Head of caudate nucleus (tissue), 42 donors: ENCODE measurements at regions of chr6 and their contacts with region 1.

Region 1: GRCh38 chr6:138588805-138589434 is 89.6 kb upstream of the NHSL1 start:
- DNase-seq: peak in 40 of 42 donors; percentile 30 to 85 (median 64)

Region 2: GRCh38 chr6:138428944-138429598 is 159.8 kb before region 1 on chr6:
- intact Hi-C with region 1: loop called (anchors 10 kb)
- DNase-seq: peak in 3 of 42 donors; percentile 37 to 53 (median 46)

Region 3: DNA sequence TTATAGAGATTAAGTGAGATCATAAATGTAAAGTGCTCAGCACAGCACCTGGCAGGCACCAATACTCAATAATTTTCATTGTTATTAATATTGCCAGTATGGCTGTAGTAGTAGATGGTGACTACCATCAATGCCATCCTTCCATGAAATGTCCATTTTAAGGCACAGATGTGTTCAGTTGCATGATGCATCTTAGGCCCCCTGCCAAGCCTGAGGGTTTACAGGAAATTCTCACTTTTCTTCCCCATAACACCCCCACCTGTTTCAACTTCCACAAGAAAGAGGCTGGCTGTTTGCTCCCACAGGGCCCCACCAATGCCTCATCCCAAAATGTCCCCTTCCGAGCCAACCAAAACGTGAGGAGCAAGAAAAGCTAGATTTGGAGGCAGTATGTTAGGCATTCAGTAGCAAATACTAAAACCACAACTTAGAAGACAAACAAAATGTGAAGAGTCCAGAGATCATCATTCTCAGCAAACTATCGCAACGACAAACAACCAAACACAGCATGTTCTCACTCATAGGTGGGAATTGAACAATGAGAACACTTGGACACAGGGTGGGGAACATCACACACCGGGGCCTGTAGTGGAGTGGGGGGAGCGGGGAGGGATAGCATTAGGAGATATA is 21.0 kb after region 1 on chr6:
- intact Hi-C with region 1: no loop called
- DNase-seq: no peak

Region 4: DNA sequence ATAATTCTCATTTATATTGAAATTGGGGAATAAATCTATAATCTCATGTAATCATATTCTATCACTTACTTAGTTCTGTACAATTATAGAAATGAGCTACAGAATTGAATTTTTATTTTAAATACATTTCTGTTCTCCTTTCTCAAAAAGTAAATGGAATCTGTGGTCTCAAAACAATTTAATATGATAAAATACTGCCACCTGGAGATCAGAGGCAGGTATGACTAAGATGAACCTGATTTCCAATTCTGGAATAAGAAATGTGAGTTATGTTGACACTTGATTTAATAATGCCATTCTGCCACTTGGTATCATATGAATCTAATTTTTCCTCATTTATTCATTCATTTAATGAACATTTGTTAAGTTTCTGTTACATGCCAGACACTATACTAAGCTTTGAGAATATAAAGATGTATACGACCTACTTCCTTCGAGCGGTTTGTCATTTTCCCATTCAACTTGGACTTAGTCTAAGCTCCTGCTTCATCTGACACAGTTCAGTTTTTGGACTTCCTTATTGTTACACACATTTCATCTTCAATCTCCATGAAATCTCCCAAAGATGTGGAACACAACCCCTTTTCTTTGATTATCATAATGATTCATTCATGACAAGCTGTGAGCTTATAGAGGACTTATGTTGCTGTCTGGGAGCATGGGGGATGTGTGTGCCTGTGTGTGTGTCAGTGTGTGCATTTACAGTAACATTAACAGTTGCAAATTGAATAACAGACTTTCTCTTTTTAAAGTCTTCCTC is 177.2 kb after region 1 on chr6:
- intact Hi-C with region 1: loop called (anchors 2 kb)
- DNase-seq: peak in 1 of 42 donors; percentile 31